HEK293 (cell line): ENCODE measurements at regions of chr9 and their contacts with region 1.

Region 1: GRCh38 chr9:6667633-6668280 is 22.2 kb upstream of the GLDC start:
- H3K4me3 ChIP-seq: no peak overlapping the region
- H3K27ac ChIP-seq: no peak overlapping the region
- H3K4me1 ChIP-seq: no peaks in the 10 kb centered on the region
- CTCF ChIP-seq: peak; percentile 21; the same call in 1 of the 2 replicates

Region 2: GRCh38 chr9:6566409-6567139 is 101.2 kb before region 1 on chr9:
- CTCF ChIA-PET with region 1: interaction called, 13 read pairs
- POLR2A ChIA-PET with region 1: no interaction called
- H3K4me3 ChIP-seq: no peak overlapping the region
- H3K27ac ChIP-seq: no peak overlapping the region
- H3K4me1 ChIP-seq: no peaks in the 10 kb centered on the region
- CTCF ChIP-seq: no peak

Region 3: DNA sequence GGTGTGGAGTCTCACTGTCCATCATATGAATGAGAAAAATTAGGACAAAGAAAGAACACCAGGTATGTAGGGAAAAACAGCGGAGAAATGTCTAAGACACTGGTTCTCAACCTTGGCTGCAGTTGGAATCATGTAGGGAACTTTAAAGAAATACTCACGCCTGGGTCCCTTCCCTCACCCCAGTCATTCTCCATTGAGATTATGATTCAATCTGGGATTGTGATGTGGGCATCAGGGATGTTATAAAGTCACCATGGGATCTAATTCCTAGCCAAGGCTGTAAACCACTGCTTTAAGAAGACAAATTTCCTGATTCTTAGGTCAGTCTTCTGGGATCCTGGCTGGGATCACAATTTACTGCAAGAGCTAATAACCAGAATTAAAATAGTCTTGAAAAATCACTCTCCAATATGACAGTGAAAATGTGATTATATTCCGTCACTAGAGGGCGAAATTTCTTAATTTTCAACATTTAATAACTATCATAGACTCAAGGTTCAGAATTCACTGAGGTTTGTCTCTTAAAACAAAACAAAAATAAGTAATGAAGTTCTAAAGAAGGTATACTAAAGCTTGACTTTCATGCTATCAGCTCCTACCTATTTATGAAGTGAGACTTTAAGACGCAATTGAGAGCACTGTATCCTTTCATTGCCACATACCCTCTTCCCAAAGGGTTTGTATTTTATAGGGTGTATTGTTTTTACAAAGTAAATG is 82.7 kb before region 1 on chr9:
- CTCF ChIA-PET with region 1: interaction called, 36 read pairs
- POLR2A ChIA-PET with region 1: no interaction called
- H3K4me3 ChIP-seq: no peak overlapping the region
- H3K27ac ChIP-seq: no peak overlapping the region
- H3K4me1 ChIP-seq: no peaks in the 10 kb centered on the region
- CTCF ChIP-seq: no peak

Region 4: DNA sequence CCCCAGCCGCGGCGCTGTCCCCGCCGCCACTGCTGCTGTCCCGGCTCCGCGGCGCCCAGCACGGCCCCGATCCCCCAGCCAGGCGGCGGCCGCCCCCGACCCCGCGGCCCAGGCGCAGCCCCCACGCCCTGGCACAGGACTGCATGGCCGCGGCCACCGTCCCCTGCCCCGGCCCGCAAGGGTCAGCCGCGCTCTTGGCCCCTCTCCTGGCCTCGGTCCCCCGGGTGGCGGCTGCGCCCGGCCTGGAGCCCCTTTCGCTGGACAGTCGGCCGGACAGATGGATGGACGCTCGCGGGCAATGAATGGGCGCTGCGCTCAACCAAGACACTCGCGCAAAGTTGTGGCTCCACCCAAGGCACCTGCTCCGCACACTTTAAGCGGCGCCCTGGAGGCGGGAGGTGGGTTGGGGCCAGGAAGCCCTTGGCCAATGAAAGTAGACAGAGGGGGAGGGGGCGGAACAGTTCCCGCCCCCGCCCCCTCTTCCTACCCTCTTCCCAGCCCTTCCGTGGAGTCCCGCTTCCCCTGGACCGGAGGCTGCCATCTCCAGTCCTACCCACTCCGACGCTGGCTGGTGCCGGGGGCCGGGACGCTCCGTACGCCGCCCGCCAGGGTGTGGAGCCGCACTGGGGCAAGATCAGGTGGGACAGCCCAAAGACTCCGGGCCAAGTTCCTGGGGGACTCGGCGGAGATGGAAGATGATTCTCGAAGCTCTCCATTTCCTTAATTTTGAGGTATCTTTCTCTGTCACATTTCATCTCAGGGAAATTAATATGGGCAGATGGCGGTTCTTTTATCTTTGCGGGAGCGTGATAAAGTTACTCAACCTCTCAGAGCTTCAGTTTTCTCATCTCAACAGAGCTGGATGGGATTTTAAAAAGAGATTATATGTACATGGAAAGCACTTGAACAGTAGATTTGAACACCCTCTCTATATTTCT is 22.1 kb before region 1 on chr9 and contains the start of gene GLDC:
- CTCF ChIA-PET with region 1: interaction called, 10 read pairs
- POLR2A ChIA-PET with region 1: no interaction called
- H3K4me3 ChIP-seq: peak within 1 kb of the TSS; percentile 57
- H3K27ac ChIP-seq: peak within 1 kb of the TSS; percentile 39; the same call in 1 of the 2 replicates
- H3K4me1 ChIP-seq: no peaks in the 10 kb centered on the region
- CTCF ChIP-seq: no peak

Region 5: DNA sequence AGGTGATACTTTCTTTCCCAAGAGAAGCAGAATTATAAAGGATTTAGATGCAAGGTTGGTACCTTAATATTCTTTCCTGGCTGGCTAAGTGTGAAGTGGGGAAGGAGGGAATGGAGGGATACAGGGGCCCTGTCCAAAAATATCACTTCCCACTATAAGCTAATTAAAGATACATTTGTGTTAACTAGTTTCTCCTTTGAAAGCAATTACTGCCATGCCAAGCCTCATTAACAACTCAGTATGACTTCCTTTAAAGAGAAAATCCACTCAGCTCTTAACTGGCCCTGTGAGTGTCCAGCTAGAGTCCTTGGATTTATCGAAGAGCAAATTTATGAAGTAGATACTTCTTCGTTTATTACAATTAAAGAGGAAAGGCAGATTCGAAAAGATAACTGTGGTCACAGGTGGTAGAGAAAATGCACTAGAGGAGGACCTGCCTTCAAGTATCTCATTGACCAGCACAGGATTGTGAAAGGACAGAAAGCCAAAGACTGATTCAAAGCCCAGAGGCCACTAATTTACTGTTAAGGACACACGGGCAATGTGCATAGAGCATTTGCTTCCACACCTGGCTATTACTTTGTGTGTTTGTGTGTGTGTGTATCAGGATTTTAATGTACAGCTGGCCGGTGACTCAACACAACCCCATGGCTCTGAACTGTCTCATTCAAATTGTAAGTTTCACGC is 11.0 kb before region 1 on chr9:
- CTCF ChIA-PET with region 1: interaction called, 13 read pairs
- POLR2A ChIA-PET with region 1: no interaction called
- H3K4me3 ChIP-seq: no peak overlapping the region
- H3K27ac ChIP-seq: no peak overlapping the region
- H3K4me1 ChIP-seq: no peaks in the 10 kb centered on the region
- CTCF ChIP-seq: no peak

Region 6: DNA sequence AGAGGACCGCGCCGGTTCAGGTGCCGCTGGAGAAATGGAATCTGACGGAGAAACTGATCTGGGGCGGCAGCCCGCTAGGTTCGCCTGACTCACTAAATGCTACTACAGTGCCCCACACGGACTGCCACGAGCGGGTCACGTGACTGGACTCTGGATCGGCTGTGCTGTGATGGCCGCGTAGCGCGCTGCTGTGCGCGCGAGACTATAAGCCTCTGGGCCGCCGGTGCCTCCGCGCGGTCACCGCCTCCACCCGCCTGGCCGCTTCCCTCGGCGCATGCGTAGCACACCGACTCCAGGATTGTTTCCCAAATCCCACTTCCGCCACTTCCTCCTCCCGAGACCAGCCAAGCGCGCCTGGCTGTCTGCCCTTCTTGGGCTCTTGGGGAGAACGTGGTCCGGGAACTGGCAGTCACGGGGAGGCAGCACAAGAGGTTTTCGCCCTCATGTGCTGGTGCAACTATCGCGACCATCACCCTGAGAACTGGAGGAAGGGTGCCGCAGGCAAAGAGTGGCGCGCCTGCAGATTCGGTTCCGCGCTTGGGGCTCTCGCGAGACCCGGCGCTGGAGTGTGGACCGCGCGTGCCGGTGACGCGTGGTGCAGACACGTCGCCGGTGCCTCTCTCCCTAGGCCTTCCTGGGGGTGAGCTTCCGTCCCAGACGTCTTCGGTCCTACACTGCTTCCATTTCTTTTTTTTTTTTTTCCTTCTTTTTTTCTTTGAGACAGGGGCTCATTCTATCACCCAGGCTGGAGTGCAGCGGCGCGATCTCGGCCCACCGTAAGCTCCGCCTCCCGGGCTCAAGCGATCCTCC is 13.6 kb after region 1 on chr9:
- CTCF ChIA-PET with region 1: interaction called, 15 read pairs
- POLR2A ChIA-PET with region 1: interaction called, 7 read pairs
- H3K4me3 ChIP-seq: peak overlapping the region; percentile 99
- H3K27ac ChIP-seq: peak overlapping the region; percentile 93
- H3K4me1 ChIP-seq: no peaks in the 10 kb centered on the region
- CTCF ChIP-seq: no peak